HepG2 (cell line): ENCODE measurements at regions of chr21 and their contacts with region 1.

Region 1: GRCh38 chr21:46458315-46459023 is at the start of gene DIP2A:
- DNase-seq: peak; percentile 95
- ATAC-seq: peak; percentile 98
- H3K4me3 ChIP-seq: peak within 1 kb of the TSS; percentile 85 to 98 (median 89)
- H3K27ac ChIP-seq: peak within 1 kb of the TSS; percentile 94
- H3K4me1 ChIP-seq: peaks cover 51% of the 10 kb centered on the region
- H3K27me3 ChIP-seq: no peaks in the 10 kb centered on the region; a peak in 1 of 5 replicates
- CTCF ChIP-seq: peak; percentile 57
- EP300 ChIP-seq: peak; percentile 4 to 80; a peak in 2 of 4 replicates
- POLR2A ChIP-seq: peak; percentile 85
- RAD21 ChIP-seq: peak; percentile 29; the same call in 1 of the 2 replicates
- total RNA-seq, gene DIP2A: 14.3 and 18.5 TPM in 2 replicates

Region 2: GRCh38 chr21:46472246-46472645 is 13.8 kb after region 1 on chr21:
- CTCF ChIA-PET with region 1: no interaction called
- POLR2A ChIA-PET with region 1: interaction called, 11 read pairs
- in situ Hi-C with region 1: no loop called
- intact Hi-C with region 1: no loop called
- DNase-seq: no peak
- ATAC-seq: peak; percentile 53
- H3K4me3 ChIP-seq: no peak overlapping the region
- H3K27ac ChIP-seq: no peak overlapping the region
- H3K4me1 ChIP-seq: peaks cover 10% of the 10 kb centered on the region
- H3K27me3 ChIP-seq: no peaks in the 10 kb centered on the region; a peak in 1 of 5 replicates
- CTCF ChIP-seq: no peak
- EP300 ChIP-seq: no peak
- POLR2A ChIP-seq: no peak
- RAD21 ChIP-seq: no peak

Region 3: DNA sequence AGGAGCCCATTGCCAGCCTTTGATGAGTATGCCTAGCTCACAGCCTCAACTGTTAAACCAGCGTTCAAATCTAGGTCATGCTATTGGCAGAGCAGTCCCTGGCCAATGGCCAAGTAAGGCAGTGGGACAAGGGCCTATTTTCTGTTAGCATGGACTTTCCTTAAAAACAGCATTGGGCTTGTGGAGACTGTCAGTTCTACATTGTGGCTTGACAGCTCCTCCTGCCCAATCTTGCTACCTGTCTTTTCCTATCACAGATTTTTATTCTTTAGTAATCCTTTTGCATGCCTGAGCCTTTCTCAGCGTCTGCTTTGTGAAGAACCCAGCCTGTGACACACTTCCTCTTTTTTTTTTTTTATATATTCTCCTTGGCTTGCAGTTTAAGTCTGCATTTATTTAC is 56.6 kb after region 1 on chr21:
- CTCF ChIA-PET with region 1: no interaction called
- POLR2A ChIA-PET with region 1: no interaction called
- in situ Hi-C with region 1: no loop called
- intact Hi-C with region 1: no loop called
- DNase-seq: no peak
- ATAC-seq: no peak
- H3K4me3 ChIP-seq: no peak overlapping the region
- H3K27ac ChIP-seq: no peak overlapping the region
- H3K4me1 ChIP-seq: peaks cover 2% of the 10 kb centered on the region
- H3K27me3 ChIP-seq: no peaks in the 10 kb centered on the region; a peak in 1 of 5 replicates
- CTCF ChIP-seq: no peak
- EP300 ChIP-seq: no peak
- POLR2A ChIP-seq: no peak
- RAD21 ChIP-seq: no peak

Region 4: DNA sequence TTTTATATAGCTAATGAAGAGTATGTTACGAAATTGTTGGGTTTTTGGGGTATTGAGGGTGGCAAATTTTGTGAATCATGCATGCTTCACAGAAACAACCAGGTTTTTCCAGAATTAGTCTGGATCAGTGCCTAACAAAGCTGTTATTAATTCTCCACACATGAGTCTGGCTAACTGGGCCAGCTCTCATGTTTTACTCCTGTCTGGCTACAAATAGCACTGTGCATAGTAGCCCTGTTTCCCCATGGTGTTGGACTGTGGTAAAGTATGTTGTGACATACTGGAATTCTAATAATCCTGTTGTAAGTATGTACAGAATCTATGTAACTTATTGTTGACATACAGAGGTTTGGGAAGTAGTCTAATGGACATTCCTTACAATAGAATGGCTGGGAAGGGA is 110.6 kb after region 1 on chr21:
- CTCF ChIA-PET with region 1: no interaction called
- POLR2A ChIA-PET with region 1: no interaction called
- in situ Hi-C with region 1: no loop called
- intact Hi-C with region 1: no loop called
- DNase-seq: no peak
- ATAC-seq: no peak
- H3K4me3 ChIP-seq: no peak overlapping the region
- H3K27ac ChIP-seq: no peak overlapping the region
- H3K4me1 ChIP-seq: no peaks in the 10 kb centered on the region
- H3K27me3 ChIP-seq: no peaks in the 10 kb centered on the region
- CTCF ChIP-seq: no peak
- EP300 ChIP-seq: no peak
- POLR2A ChIP-seq: no peak
- RAD21 ChIP-seq: no peak